Activated CD4-positive, alpha-beta T cell treated with anti-CD3 and anti-CD28 coated beads, Interleukin-2, amount 10 ng/mL, durations not matched to agents 24 days and 14 days (primary cell): ENCODE measurements at regions of chr3 and their contacts with region 1.

Region 1: GRCh38 chr3:152241142-152242017 is 27.3 kb upstream of the MBNL1 start:
- DNase-seq: peak; percentile 71
- H3K4me3 Mint-ChIP-seq: peak overlapping the region; percentile 62
- H3K27ac Mint-ChIP-seq: peak overlapping the region; percentile 89
- H3K4me1 Mint-ChIP-seq: peaks cover 48% of the 10 kb centered on the region
- H3K27me3 Mint-ChIP-seq: no peaks in the 10 kb centered on the region

Region 2: DNA sequence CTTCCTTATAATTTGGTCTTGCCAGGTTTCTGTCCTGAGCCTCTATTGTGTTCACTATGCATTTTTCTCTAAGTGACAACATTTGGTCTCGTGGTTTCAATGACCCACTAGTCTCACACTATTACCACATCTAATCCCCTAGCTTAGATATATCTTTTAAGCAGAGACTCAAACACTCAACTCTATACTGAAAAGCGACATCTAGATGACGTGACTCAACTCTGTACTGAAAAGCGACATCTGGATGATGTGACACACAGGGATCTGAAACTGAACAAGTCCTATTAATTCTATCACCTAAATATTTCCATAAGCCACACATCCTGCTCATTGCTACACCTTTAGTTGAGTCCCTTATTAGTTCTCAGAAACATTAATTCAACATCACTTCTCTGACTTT is 114.3 kb before region 1 on chr3:
- intact Hi-C with region 1: loop called (anchors 5 kb)
- DNase-seq: peak; percentile 59
- H3K4me3 Mint-ChIP-seq: no peak overlapping the region
- H3K27ac Mint-ChIP-seq: no peak overlapping the region
- H3K4me1 Mint-ChIP-seq: peaks cover 10% of the 10 kb centered on the region
- H3K27me3 Mint-ChIP-seq: peaks cover 15% of the 10 kb centered on the region

Region 3: GRCh38 chr3:152202976-152203626 is 38.3 kb before region 1 on chr3:
- intact Hi-C with region 1: loop called (anchors 1 kb)
- DNase-seq: no peak
- H3K4me3 Mint-ChIP-seq: peak overlapping the region; percentile 78
- H3K27ac Mint-ChIP-seq: peak overlapping the region; percentile 87
- H3K4me1 Mint-ChIP-seq: peaks cover 60% of the 10 kb centered on the region
- H3K27me3 Mint-ChIP-seq: no peaks in the 10 kb centered on the region

Region 4: DNA sequence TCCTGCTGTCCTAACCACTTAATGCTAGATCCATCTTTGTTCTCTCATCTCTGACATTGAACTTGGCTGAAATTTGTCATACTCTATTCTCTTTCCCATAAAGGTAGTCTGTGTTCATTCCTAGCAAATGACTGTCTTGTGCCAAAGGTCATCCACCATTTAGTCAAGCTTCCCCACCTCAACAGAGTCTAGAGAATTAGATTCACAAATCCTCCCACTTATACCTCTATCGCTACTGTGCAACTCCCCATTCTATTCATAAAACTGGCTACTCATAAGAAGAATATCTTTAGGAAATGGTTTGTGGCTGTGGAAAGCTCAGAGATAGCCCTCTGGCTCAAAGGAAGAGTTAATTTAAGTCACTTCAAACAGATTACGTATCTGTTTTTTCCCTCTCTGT is 32.3 kb before region 1 on chr3:
- intact Hi-C with region 1: loop called (anchors 1 kb)
- DNase-seq: peak; percentile 55
- H3K4me3 Mint-ChIP-seq: peak overlapping the region; percentile 61
- H3K27ac Mint-ChIP-seq: peak overlapping the region; percentile 84
- H3K4me1 Mint-ChIP-seq: peaks cover 66% of the 10 kb centered on the region
- H3K27me3 Mint-ChIP-seq: no peaks in the 10 kb centered on the region

Region 5: DNA sequence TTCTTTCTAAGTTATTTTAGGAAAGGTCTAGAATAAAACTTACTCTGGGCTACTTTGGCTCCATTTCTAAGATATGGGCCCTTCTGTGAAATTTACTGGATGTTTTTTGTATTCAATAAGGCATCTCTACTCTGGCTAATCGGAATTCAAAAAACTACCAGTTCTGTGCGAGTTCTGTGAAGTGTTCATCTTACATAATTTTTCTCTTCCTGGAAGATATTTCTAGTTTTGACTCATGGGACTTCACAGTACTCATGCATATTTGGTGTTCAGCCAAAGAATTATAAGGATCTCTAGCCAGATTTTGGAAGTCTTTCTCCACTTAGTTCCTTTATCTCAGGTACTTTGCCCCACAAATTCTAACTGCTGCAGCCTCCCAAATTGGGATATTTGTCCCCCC is 19.1 kb before region 1 on chr3:
- intact Hi-C with region 1: loop called (anchors 1 kb)
- DNase-seq: peak; percentile 59
- H3K4me3 Mint-ChIP-seq: peak overlapping the region; percentile 61
- H3K27ac Mint-ChIP-seq: peak overlapping the region; percentile 79
- H3K4me1 Mint-ChIP-seq: peaks cover 58% of the 10 kb centered on the region
- H3K27me3 Mint-ChIP-seq: no peaks in the 10 kb centered on the region

Region 6: DNA sequence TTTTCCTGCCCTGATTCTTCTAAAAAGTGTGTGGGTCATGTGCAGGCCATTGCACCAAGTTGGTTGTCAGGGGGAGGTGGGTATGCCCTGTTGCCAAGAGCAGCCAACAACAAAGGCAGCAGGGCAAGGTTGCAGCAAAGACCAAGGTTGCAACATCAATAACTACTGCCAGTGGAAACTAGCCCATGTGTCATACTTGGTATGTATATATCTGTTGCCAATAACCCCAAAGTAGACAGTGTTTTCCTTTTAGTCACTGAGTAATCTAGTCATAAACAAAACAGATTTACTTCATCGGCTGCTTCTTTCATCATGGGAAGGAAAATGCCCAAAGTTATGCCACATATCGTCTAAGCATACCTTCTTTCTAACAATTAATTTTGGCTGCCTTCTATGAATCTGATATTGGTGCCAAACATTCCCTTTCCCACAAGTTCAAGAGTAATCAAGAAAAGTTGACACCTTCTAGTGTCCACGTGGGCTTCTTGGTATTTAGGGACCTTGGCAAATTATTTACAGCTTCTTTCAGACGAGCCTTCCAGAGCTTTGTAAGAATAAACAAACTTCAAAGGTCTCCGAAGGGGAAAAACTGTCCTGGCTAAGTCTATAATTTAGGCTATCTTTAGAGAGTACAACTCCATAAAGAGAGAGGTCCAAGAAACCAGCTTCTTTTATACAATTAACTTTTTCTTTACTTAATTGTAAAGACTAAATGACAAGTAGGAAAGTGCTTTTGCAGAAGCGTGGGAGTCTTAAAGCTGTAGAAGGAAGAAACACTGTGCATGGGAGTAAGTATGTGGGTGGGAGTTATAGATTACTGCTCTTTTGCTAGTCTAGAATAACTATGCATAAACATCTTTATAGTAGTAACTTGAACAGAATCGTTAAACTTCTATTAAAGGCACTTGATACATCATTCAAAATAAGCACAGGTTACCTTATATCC is 17.3 kb after region 1 on chr3:
- intact Hi-C with region 1: loop called (anchors 1 kb)
- DNase-seq: peak; percentile 89
- H3K4me3 Mint-ChIP-seq: peak overlapping the region; percentile 79
- H3K27ac Mint-ChIP-seq: peak overlapping the region; percentile 97
- H3K4me1 Mint-ChIP-seq: peaks cover 75% of the 10 kb centered on the region
- H3K27me3 Mint-ChIP-seq: no peaks in the 10 kb centered on the region

Region 7: GRCh38 chr3:152298393-152299242 is 57.2 kb after region 1 on chr3:
- intact Hi-C with region 1: loop called (anchors 2 kb)
- DNase-seq: peak; percentile 83
- H3K4me3 Mint-ChIP-seq: peak overlapping the region; percentile 88
- H3K27ac Mint-ChIP-seq: peak overlapping the region; percentile 98
- H3K4me1 Mint-ChIP-seq: peaks cover 59% of the 10 kb centered on the region
- H3K27me3 Mint-ChIP-seq: no peaks in the 10 kb centered on the region